ENCODE measurements at regions of chr6 and their contacts with region 1.

Region 1: GRCh38 chr6:165729307-165729936 is 66.4 kb upstream of the PDE10A start:
- DNase-seq: peak; percentile 25 to 70
- H3K4me3 ChIP-seq: no peak overlapping the region
- CTCF ChIP-seq: no peak
- POLR2A ChIP-seq: no peak

Region 2: DNA sequence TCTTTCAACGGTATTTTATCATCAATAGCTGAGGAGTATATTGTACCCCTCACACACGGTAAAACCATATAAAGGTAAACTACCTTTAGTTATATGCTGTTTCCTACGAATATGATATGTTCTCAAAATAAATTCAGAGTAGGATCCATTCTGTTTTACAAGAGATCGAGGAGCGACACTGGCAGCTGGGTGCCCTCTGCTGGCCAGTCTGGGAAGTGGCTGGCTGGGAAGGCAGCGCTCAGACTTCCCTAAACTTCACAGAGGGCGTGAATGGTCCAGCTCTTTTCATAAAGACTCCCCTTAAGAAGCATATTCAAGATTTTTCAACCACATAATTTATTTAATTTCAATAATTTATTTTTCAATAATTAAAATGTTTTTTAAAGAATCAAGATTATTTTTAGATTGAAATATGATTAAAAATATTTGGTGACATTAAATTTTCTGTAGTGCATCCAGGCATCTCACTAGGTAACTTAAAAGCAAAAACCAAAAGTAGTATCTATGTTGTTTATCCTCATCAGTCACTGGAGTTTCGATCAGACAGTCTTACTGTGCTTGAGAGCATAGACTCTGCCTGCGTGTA is 121.1 kb after region 1 on chr6:
- intact Hi-C with region 1: loop called (anchors 10 kb)
- DNase-seq: peak; percentile 59 to 94
- H3K4me3 ChIP-seq: no peak overlapping the region
- CTCF ChIP-seq: no peak
- POLR2A ChIP-seq: no peak